ENCODE measurements at regions of chr17 and their contacts with region 1.

Region 1: DNA sequence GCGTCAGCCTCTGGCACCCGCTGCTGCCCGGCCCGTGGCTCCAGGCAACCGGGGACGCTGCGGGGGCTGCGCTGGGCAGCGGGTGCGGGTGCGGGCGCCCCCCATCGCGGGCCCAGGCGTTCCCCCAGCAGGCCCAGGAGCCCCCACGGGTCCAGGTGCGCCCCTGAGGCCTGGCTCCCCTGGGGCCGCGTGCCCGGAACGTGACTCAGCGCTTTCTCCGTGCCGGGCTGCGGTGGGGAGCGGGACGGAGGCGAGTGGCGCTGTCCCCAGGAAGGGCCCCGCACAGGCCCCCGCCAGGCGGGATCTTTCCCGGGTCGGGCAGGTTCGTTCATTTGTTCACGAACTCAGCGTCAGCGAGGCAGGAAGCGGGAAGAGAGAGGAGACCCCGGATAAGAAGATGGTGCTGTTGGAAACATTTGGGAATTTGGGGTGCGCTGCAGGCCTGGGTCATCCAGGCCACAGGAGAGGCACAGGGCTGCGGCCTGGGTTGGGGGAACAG is 18.4 kb upstream of the EXOC7 start:
- DNase-seq: peak in 3 of 14 experiments; percentile 21 to 49 (median 41)
- ATAC-seq: peak; percentile 12
- H3K4me3 ChIP-seq: peak overlapping the region; percentile 52
- H3K4me3 Mint-ChIP-seq: no peak overlapping the region
- H3K27ac ChIP-seq: no peak overlapping the region
- H3K27ac Mint-ChIP-seq: peak overlapping the region; percentile 42
- H3K4me1 ChIP-seq: peaks cover 31% of the 10 kb centered on the region
- H3K4me1 Mint-ChIP-seq: peaks cover 17% of the 10 kb centered on the region
- H3K27me3 ChIP-seq: no peaks in the 10 kb centered on the region
- H3K27me3 Mint-ChIP-seq: no peaks in the 10 kb centered on the region
- CTCF ChIP-seq: no peak

Region 2: DNA sequence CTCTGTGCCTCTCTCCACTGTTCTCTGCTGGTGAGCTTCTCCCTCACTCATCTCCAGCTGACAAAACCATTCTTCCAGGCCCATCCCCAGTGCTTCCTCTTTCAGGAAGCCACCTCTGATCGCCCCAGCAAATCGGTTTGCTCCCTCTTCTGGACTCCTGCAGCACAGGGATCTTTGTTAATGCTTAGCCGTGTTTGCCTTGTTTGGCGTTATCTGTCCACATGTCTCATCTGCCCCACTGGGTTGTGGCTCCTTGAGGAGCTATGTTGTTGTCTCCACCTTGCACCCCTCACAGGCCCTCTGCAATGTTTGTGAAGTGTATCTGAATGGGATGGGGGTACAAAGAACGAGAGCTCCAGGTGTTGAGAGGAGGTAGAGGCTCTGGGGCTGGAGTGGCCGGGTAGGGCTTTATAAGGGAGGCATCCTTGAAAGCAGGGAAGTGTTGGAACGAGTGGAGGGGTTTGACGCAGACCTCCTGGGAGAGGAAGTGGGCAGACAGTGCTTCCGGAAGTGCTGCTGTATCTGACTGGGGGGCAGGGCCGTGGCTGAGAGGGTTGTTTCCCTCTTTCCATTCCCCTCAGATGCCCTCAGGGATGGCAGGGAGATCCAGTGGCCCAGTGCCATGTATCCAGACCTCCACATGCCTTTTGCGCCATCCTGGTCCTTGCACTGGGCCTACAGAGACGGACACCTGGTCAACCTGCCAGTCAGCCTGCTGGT is 634.5 kb before region 1 on chr17:
- CTCF ChIA-PET with region 1: no interaction called
- POLR2A ChIA-PET with region 1: no interaction called
- intact Hi-C with region 1: no loop called
- DNase-seq: peak in 13 of 14 experiments; percentile 6 to 81 (median 51)
- ATAC-seq: peak; percentile 96
- H3K4me3 ChIP-seq: peak overlapping the region; percentile 20
- H3K4me3 Mint-ChIP-seq: peak overlapping the region; percentile 76
- H3K27ac ChIP-seq: peak overlapping the region; percentile 55 to 65
- H3K27ac Mint-ChIP-seq: peak overlapping the region; percentile 95
- H3K4me1 ChIP-seq: peaks cover 30% of the 10 kb centered on the region
- H3K4me1 Mint-ChIP-seq: peaks cover 26% of the 10 kb centered on the region
- H3K27me3 ChIP-seq: no peaks in the 10 kb centered on the region
- H3K27me3 Mint-ChIP-seq: no peaks in the 10 kb centered on the region
- CTCF ChIP-seq: no peak

Region 3: DNA sequence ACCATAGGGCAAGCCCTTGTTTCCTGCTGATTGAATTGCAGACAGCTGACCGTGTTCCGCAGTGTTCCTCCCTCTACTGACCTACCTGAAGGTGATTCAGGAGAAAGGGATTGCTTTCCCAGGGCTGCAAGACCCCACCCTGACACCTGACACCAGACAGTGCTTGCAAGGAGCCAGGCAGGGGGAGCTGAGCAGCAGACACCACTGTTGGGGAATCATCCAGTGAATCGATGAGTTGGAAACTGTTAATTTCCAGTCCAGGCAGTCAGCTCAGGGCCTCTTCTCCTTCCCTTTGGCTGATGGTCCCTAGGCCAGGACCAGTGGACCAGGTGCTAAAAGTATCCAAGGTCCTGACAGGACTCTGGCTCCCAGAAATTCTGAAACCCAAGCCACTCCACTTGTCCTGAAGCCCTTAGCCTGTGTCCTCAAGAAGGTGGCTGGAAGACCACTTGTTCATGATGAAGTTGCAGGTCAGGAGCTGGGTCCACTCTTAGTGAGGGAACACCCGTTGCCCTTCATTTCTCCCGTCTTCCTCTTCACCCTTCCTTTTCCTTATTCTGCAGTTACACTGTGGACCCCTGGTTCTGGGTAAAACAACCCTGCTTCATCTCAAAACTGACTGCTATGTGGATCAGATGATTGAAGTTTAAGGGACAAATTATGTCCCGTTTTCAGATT is 346.9 kb before region 1 on chr17:
- CTCF ChIA-PET with region 1: no interaction called
- POLR2A ChIA-PET with region 1: no interaction called
- intact Hi-C with region 1: no loop called
- DNase-seq: peak in 2 of 14 experiments; percentile 30 to 67
- ATAC-seq: no peak
- H3K4me3 ChIP-seq: no peak overlapping the region
- H3K4me3 Mint-ChIP-seq: peak overlapping the region; percentile 97
- H3K27ac ChIP-seq: no peak overlapping the region
- H3K27ac Mint-ChIP-seq: peak overlapping the region; percentile 72
- H3K4me1 ChIP-seq: peaks cover 12% of the 10 kb centered on the region
- H3K4me1 Mint-ChIP-seq: peaks cover 46% of the 10 kb centered on the region
- H3K27me3 ChIP-seq: no peaks in the 10 kb centered on the region
- H3K27me3 Mint-ChIP-seq: peaks cover 5% of the 10 kb centered on the region
- CTCF ChIP-seq: no peak

Region 4: DNA sequence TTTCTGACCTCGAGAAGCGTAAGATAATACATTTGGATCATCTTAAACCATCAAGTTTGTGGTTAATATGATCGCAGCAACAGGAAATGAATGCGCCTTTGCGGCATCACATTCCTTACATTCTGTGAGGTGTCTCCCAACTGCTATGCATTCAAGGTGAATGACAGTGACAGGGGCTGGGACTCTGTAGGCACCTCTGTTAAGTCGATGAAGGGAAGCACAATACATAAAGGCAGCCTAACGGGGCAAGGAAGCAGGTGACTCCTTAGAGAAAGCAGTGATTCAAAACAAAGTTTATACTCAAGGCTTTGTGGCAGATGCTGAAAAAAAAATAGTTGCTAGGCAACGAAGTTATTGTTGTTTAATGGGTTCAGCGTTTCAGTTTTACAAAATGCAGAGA is 73.3 kb before region 1 on chr17:
- CTCF ChIA-PET with region 1: no interaction called
- POLR2A ChIA-PET with region 1: no interaction called
- intact Hi-C with region 1: no loop called
- DNase-seq: peak in 3 of 14 experiments; percentile 32 to 52 (median 39)
- ATAC-seq: peak; percentile 84
- H3K4me3 ChIP-seq: no peak overlapping the region
- H3K4me3 Mint-ChIP-seq: no peak overlapping the region
- H3K27ac ChIP-seq: no peak overlapping the region
- H3K27ac Mint-ChIP-seq: peak overlapping the region; percentile 59
- H3K4me1 ChIP-seq: no peaks in the 10 kb centered on the region
- H3K4me1 Mint-ChIP-seq: peaks cover 18% of the 10 kb centered on the region
- H3K27me3 ChIP-seq: no peaks in the 10 kb centered on the region
- H3K27me3 Mint-ChIP-seq: no peaks in the 10 kb centered on the region
- CTCF ChIP-seq: no peak

Region 5: GRCh38 chr17:76141212-76142038 is 19.4 kb after region 1 on chr17 and contains the start of gene FOXJ1:
- CTCF ChIA-PET with region 1: interaction called, 9 read pairs
- POLR2A ChIA-PET with region 1: interaction called, 11 read pairs
- intact Hi-C with region 1: no loop called
- DNase-seq: peak; percentile 83 to 97 (median 92)
- ATAC-seq: peak; percentile 64
- H3K4me3 ChIP-seq: peak within 1 kb of the TSS; percentile 51
- H3K4me3 Mint-ChIP-seq: peak within 1 kb of the TSS; percentile 87
- H3K27ac ChIP-seq: no peak within 1 kb of the TSS
- H3K27ac Mint-ChIP-seq: peak within 1 kb of the TSS; percentile 97
- H3K4me1 ChIP-seq: peaks cover 68% of the 10 kb centered on the region
- H3K4me1 Mint-ChIP-seq: peaks cover 60% of the 10 kb centered on the region
- H3K27me3 ChIP-seq: peaks cover 8 to 11% of the 10 kb centered on the region in 2 experiments
- H3K27me3 Mint-ChIP-seq: peaks cover 10% of the 10 kb centered on the region
- CTCF ChIP-seq: no peak
- total RNA-seq, gene FOXJ1: 0.63 to 0.89 TPM

Region 6: GRCh38 chr17:76191896-76192295 is 69.9 kb after region 1 on chr17:
- CTCF ChIA-PET with region 1: interaction called, 12 read pairs
- POLR2A ChIA-PET with region 1: interaction called, 3 read pairs
- intact Hi-C with region 1: no loop called
- DNase-seq: peak in 7 of 14 experiments; percentile 26 to 92 (median 60)
- ATAC-seq: peak; percentile 81
- H3K4me3 ChIP-seq: peak overlapping the region; percentile 11
- H3K4me3 Mint-ChIP-seq: peak overlapping the region; percentile 65
- H3K27ac ChIP-seq: peak overlapping the region; percentile 73 to 79
- H3K27ac Mint-ChIP-seq: peak overlapping the region; percentile 93
- H3K4me1 ChIP-seq: peaks cover 93% of the 10 kb centered on the region
- H3K4me1 Mint-ChIP-seq: peaks cover 72% of the 10 kb centered on the region
- H3K27me3 ChIP-seq: no peaks in the 10 kb centered on the region
- H3K27me3 Mint-ChIP-seq: no peaks in the 10 kb centered on the region
- CTCF ChIP-seq: no peak

Region 7: DNA sequence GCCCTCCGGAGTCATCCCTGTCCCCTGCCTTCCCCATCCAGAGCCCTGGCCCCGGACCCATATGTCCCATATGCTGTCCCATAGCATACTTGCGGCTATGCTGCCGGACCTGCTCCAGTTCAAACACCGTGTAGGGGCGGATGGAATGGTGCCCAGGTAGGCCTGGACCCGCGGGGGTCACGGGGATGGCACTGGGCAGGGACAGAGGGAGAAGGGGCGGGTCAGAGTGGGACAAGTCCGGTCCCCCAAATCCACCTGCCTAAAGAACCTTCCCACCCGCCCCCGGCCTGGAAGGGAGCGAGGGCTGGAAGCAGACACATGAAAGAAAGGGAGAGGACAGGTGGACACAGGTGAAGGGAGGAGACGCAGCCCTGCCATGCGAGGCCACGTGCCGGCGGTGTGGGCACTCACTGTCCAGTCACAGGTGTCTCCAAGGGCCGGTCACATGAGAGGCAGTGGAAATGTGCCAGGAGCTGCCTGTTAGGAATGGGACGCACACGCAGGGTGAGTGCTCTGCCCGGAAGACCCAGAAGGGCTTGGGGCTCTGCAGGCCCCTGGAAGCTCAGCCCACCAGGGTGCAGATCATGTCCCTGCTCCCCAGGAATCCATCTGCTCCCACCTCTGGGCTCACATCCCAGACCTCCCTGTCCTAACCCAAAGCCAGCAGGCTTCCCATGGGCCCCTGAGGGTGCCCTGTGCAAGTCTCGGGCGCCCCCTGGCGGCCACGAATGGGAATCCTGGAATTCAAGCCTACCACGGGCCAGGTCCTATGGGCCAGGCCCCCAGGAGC is 157.2 kb after region 1 on chr17:
- CTCF ChIA-PET with region 1: interaction called, 130 read pairs
- POLR2A ChIA-PET with region 1: interaction called, 13 read pairs
- intact Hi-C with region 1: loop called (anchors 1 kb)
- DNase-seq: peak; percentile 74 to 91 (median 84)
- ATAC-seq: peak; percentile 89
- H3K4me3 ChIP-seq: no peak overlapping the region
- H3K4me3 Mint-ChIP-seq: no peak overlapping the region
- H3K27ac ChIP-seq: no peak overlapping the region
- H3K27ac Mint-ChIP-seq: no peak overlapping the region
- H3K4me1 ChIP-seq: peaks cover 31% of the 10 kb centered on the region
- H3K4me1 Mint-ChIP-seq: peaks cover 13% of the 10 kb centered on the region
- H3K27me3 ChIP-seq: no peaks in the 10 kb centered on the region
- H3K27me3 Mint-ChIP-seq: no peaks in the 10 kb centered on the region
- CTCF ChIP-seq: peak; percentile 98

Region 8: DNA sequence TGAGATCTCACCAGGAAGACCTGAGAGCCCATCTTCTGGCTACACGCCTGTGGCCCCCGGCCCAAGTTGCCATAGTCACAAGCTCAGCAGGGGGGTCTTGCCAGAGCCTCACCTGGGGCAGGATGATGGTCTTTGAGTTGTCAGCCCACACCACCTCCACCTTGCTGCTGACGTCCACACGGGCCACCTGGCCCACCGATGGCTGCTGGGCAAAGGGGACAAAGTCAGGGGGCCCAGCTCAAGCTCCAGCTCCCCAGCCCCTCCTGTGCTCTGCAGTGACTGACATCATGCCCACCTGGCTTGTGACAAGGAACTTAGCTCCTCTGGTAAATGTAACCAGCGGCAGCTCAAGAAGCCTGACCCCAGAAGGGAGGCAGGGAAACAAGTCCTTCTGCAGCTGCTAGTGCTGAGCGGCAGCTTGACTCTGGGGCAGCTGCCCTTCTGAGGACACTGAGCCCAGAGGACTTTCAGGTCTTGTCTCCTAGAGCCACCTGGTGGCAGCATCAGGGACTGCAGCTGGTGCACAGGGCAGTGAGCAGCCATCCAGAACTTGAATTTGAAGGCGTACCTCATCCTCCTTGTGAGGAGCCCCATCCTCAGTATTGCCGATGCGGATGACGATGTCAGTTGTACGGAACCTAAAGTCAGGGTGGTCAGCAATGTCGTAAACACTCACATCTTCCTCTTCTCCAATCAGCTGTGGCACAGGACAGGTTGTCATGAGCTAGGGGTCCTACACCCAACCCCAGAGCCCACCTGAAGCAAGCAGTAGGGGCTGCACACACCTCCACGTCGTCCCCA is 275.9 kb after region 1 on chr17:
- CTCF ChIA-PET with region 1: no interaction called
- POLR2A ChIA-PET with region 1: no interaction called
- intact Hi-C with region 1: loop called in 1 of 2 experiments (anchors 5 kb)
- DNase-seq: peak; percentile 76 to 90 (median 83)
- ATAC-seq: peak; percentile 92
- H3K4me3 ChIP-seq: no peak overlapping the region
- H3K4me3 Mint-ChIP-seq: no peak overlapping the region
- H3K27ac ChIP-seq: no peak overlapping the region
- H3K27ac Mint-ChIP-seq: no peak overlapping the region
- H3K4me1 ChIP-seq: no peaks in the 10 kb centered on the region
- H3K4me1 Mint-ChIP-seq: no peaks in the 10 kb centered on the region
- H3K27me3 ChIP-seq: no peaks in the 10 kb centered on the region
- H3K27me3 Mint-ChIP-seq: no peaks in the 10 kb centered on the region
- CTCF ChIP-seq: peak; percentile 94

Measured in CD4-positive, alpha-beta T cell (primary cell).